H1 (cell line): ENCODE measurements at regions of chr12 and their contacts with region 1.

Region 1: GRCh38 chr12:120194534-120195395 is at the start of gene GCN1:
- DNase-seq: peak; percentile 62 to 94
- H3K4me3 ChIP-seq: peak within 1 kb of the TSS; percentile 86 to 96 (median 88)
- H3K27ac ChIP-seq: peak within 1 kb of the TSS; percentile 77
- H3K4me1 ChIP-seq: peaks cover 0 to 3% (median under 1%) of the 10 kb centered on the region in 4 experiments; a peak in 5 of 7 replicates
- H3K27me3 ChIP-seq: no peaks in the 10 kb centered on the region
- CTCF ChIP-seq: peak in 1 of 3 experiments; percentile 10; a peak in 1 of 4 replicates
- EP300 ChIP-seq: no peak
- POLR2A ChIP-seq: peak; percentile 90 to 93
- RAD21 ChIP-seq: no peak
- total RNA-seq, gene GCN1: 133 and 137 TPM in 2 replicates

Region 2: GRCh38 chr12:119959435-119959834 is 235.3 kb before region 1 on chr12:
- CTCF ChIA-PET with region 1: no interaction called
- POLR2A ChIA-PET with region 1: no interaction called
- DNase-seq: no peak
- H3K4me3 ChIP-seq: no peak overlapping the region
- H3K27ac ChIP-seq: no peak overlapping the region
- H3K4me1 ChIP-seq: no peaks in the 10 kb centered on the region
- H3K27me3 ChIP-seq: no peaks in the 10 kb centered on the region
- CTCF ChIP-seq: no peak
- EP300 ChIP-seq: no peak
- POLR2A ChIP-seq: no peak
- RAD21 ChIP-seq: no peak

Region 3: GRCh38 chr12:120051535-120051934 is 143.2 kb before region 1 on chr12:
- CTCF ChIA-PET with region 1: no interaction called
- POLR2A ChIA-PET with region 1: no interaction called
- DNase-seq: no peak
- H3K4me3 ChIP-seq: no peak overlapping the region
- H3K27ac ChIP-seq: no peak overlapping the region
- H3K4me1 ChIP-seq: no peaks in the 10 kb centered on the region
- H3K27me3 ChIP-seq: no peaks in the 10 kb centered on the region
- CTCF ChIP-seq: no peak
- EP300 ChIP-seq: no peak
- POLR2A ChIP-seq: no peak
- RAD21 ChIP-seq: no peak

Region 4: GRCh38 chr12:120093592-120094355 is 101.0 kb before region 1 on chr12:
- CTCF ChIA-PET with region 1: no interaction called
- POLR2A ChIA-PET with region 1: interaction called, 14 read pairs
- DNase-seq: peak in 1 of 2 experiments; percentile 86
- H3K4me3 ChIP-seq: peak overlapping the region in 2 of 4 experiments; percentile 11 to 14; a peak in 3 of 8 replicates
- H3K27ac ChIP-seq: peak overlapping the region; percentile 58; the same call in 1 of the 2 replicates
- H3K4me1 ChIP-seq: peaks cover 6 to 38% (median 29%) of the 10 kb centered on the region in 4 experiments
- H3K27me3 ChIP-seq: no peaks in the 10 kb centered on the region
- CTCF ChIP-seq: no peak
- EP300 ChIP-seq: no peak
- POLR2A ChIP-seq: peak in 1 of 2 experiments; percentile 34; a peak in 1 of 3 replicates
- RAD21 ChIP-seq: no peak; a peak in 1 of 4 replicates

Region 5: GRCh38 chr12:120116792-120117651 is 77.7 kb before region 1 on chr12:
- CTCF ChIA-PET with region 1: no interaction called
- POLR2A ChIA-PET with region 1: interaction called, 266 read pairs
- DNase-seq: peak; percentile 85 to 99
- H3K4me3 ChIP-seq: peak overlapping the region; percentile 63 to 93 (median 89)
- H3K27ac ChIP-seq: no peak overlapping the region; the same call in 1 of the 2 replicates
- H3K4me1 ChIP-seq: peaks cover 5 to 14% (median 9%) of the 10 kb centered on the region in 4 experiments; a peak in 6 of 7 replicates
- H3K27me3 ChIP-seq: no peaks in the 10 kb centered on the region
- CTCF ChIP-seq: no peak
- EP300 ChIP-seq: no peak
- POLR2A ChIP-seq: peak in 1 of 2 experiments; percentile 57; a peak in 2 of 3 replicates
- RAD21 ChIP-seq: no peak

Region 6: GRCh38 chr12:120132863-120133385 is 61.8 kb before region 1 on chr12:
- CTCF ChIA-PET with region 1: no interaction called
- POLR2A ChIA-PET with region 1: interaction called, 266 read pairs
- DNase-seq: no peak
- H3K4me3 ChIP-seq: no peak overlapping the region
- H3K27ac ChIP-seq: no peak overlapping the region
- H3K4me1 ChIP-seq: no peaks in the 10 kb centered on the region
- H3K27me3 ChIP-seq: no peaks in the 10 kb centered on the region; a peak in 1 of 7 replicates
- CTCF ChIP-seq: no peak
- EP300 ChIP-seq: no peak
- POLR2A ChIP-seq: no peak
- RAD21 ChIP-seq: no peak

Region 7: GRCh38 chr12:120159509-120160237 is 35.1 kb before region 1 on chr12:
- CTCF ChIA-PET with region 1: no interaction called
- POLR2A ChIA-PET with region 1: interaction called, 358 read pairs
- DNase-seq: no peak
- H3K4me3 ChIP-seq: no peak overlapping the region
- H3K27ac ChIP-seq: no peak overlapping the region
- H3K4me1 ChIP-seq: no peaks in the 10 kb centered on the region
- H3K27me3 ChIP-seq: no peaks in the 10 kb centered on the region
- CTCF ChIP-seq: no peak
- EP300 ChIP-seq: no peak
- POLR2A ChIP-seq: no peak
- RAD21 ChIP-seq: no peak

Region 8: DNA sequence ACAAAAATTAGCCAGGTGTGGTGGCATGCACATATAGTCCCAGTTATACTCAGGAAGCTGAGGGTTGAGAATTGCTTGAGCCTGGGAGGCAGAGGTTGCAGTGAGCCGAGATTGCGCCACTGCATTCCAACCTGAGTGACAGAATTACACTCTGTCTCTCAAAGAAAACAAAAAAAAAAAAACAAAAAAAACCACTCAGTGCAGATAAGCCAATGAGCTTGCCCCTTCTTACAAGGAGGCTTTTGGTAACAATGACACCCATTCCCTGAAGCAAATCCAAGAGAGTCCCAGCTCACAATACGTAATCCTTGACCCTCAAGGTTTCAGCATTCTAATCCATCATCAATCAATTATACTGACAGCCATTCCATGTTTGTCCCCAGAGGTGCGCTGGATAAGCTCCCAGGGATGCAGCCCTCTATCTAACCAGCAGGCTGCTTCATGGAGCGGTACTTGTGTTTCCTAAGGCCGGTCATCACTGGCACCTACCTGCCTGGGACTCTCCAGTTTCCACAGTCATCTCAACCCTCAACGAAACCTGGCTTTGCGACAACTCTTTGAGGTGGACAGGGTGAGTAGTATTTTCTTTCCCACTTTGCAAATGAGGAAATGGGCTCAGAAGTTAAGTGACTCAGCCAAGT is 12.7 kb before region 1 on chr12:
- CTCF ChIA-PET with region 1: no interaction called
- POLR2A ChIA-PET with region 1: interaction called, 1,305 read pairs
- DNase-seq: no peak
- H3K4me3 ChIP-seq: no peak overlapping the region
- H3K27ac ChIP-seq: no peak overlapping the region
- H3K4me1 ChIP-seq: no peaks in the 10 kb centered on the region
- H3K27me3 ChIP-seq: no peaks in the 10 kb centered on the region
- CTCF ChIP-seq: no peak
- EP300 ChIP-seq: no peak
- POLR2A ChIP-seq: no peak
- RAD21 ChIP-seq: no peak

Region 9: DNA sequence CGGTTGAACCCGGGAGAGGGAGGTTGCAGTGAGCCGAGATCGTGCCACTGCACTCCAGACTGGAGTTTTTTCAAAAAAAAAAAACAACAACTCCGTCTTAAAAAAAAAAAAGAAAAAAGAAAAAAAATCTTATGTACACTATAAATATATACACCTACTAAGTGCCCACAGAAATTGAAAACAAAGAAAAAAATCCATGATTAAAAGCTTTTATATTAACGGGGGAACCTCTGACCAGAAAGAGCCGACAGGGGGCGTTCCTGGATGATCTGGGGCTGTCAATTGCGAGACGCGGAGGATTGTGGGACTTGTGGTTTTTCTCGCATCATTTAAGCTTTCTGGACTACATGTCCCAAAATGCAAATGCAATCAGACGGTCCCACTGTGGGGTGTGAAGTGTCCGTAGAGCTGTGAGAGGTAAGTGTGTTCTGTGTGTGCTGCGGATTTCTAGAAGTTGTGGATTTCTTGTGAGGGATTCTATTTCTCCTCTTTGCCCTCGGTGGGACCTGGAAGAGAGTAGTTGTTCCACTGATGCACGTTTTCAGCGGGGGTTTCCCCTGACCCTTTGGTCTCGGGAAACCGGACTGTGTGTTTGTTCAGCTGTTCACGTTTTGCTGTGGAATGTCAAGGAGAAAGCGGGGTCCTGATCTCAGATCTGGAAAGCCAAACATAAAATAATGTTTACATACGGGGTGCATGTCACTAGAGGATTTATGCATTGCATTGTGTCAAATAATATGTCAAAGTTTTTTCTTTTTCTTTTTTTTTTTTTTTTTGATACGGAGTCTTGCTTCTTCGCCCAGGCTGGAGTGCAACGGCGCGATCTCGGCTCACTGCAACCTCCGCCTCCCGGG is 107.4 kb after region 1 on chr12 and contains the start of gene SIRT4:
- CTCF ChIA-PET with region 1: no interaction called
- POLR2A ChIA-PET with region 1: interaction called, 4,270 read pairs
- DNase-seq: peak in 1 of 2 experiments; percentile 87
- H3K4me3 ChIP-seq: peak within 1 kb of the TSS; percentile 79 to 98 (median 88)
- H3K27ac ChIP-seq: peak within 1 kb of the TSS; percentile 84
- H3K4me1 ChIP-seq: no peaks in the 10 kb centered on the region
- H3K27me3 ChIP-seq: no peaks in the 10 kb centered on the region
- CTCF ChIP-seq: peak; percentile 68 to 81 (median 69)
- EP300 ChIP-seq: peak in 1 of 2 experiments; percentile 88; a peak in 1 of 3 replicates
- POLR2A ChIP-seq: no peak
- RAD21 ChIP-seq: peak in 1 of 2 experiments; percentile 26; a peak in 1 of 4 replicates
- total RNA-seq, gene SIRT4: 2.3 and 4.1 TPM in 2 replicates

Region 10: DNA sequence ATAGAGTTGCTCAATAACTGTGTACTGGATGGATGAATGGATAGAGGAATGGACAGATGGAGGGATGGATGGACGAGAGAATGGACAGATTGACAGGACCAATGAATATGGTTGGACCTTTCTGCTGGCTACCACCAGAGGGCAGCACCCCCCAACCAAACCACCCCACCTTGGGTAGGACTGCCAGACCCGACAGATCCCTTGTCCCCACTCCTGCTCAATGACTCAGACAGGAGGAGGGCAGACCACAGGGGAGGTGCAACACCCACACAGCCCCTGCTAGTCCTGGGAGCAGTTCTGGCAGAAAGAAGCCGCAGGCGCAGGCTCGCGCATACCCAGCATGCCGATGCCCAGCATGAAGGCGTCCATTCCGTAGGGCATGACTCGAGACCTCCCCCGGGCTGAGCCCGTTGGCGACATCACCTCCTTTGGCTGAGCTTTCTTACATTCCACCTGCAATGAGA is 161.8 kb after region 1 on chr12:
- CTCF ChIA-PET with region 1: no interaction called
- POLR2A ChIA-PET with region 1: no interaction called
- DNase-seq: peak; percentile 80 to 90
- H3K4me3 ChIP-seq: no peak overlapping the region
- H3K27ac ChIP-seq: no peak overlapping the region
- H3K4me1 ChIP-seq: peaks cover 8 to 16% (median 13%) of the 10 kb centered on the region in 4 experiments
- H3K27me3 ChIP-seq: no peaks in the 10 kb centered on the region
- CTCF ChIP-seq: peak; percentile 91 to 94 (median 93)
- EP300 ChIP-seq: no peak
- POLR2A ChIP-seq: no peak
- RAD21 ChIP-seq: peak; percentile 93 to 96